ENCODE measurements at regions of chr5 and their contacts with region 1.

Region 1: GRCh38 chr5:36079200-36079761 is 12.6 kb upstream of the UGT3A2 start:
- DNase-seq: peak; percentile 61
- ATAC-seq: peak; percentile 99
- H3K4me3 ChIP-seq: no peak overlapping the region
- H3K27ac ChIP-seq: no peak overlapping the region
- H3K4me1 ChIP-seq: peaks cover 0 to 4% of the 10 kb centered on the region in 2 experiments; a peak in 1 of 4 replicates
- H3K27me3 ChIP-seq: no peaks in the 10 kb centered on the region
- CTCF ChIP-seq: peak; percentile 32 to 70 (median 69); a peak in 4 of 6 replicates
- POLR2A ChIP-seq: no peak
- RAD21 ChIP-seq: peak; percentile 64

Region 2: DNA sequence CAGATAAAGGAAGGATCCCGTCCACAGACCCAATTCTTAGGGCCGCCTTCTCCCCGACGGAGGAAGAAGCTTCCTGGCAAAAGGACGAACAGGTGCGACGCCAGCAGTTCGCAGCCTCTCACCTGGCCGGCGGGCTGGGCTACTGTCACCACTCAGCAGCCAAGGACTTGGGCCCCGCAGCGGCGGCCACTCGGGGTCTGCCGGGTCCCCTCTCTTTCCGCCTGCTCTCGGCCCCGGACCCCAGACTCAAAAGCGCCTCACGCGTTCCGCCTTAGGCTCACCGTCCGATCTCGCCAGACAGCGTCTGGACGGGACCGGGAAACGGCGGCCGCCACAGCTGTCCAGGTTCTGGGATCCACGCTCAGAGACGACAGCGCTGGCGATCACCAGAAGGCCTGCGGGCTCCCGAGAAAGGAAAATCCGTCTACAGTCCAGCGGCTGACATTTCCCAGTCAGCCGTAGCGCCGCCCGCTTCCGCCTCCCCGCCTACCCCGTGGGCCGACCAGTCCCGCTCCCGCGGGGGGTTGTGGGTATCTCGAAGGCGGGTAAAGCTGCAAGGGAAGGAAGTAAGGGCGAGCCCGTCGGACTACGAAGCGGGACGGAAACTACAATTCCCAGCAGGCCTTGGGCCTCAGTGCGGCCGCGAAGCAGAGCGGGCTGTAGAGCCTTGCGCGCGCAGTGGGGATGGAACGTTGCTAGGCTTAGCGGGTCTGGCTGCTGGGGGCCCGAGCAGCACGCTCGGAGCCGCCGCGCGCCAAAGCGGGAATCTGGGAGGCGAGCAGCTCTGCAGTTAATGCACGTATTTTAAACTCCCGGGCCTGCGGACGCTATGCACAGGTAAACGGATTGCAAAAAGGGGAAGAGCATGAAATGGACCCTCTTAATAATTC is 72.4 kb after region 1 on chr5 and contains the starts of genes LMBRD2 and SKP2:
- CTCF ChIA-PET with region 1: interaction called, 13 read pairs
- POLR2A ChIA-PET with region 1: interaction called, 4 read pairs
- RAD21 ChIA-PET with region 1: interaction called in 1 of 2 experiments, 4 read pairs
- intact Hi-C with region 1: no loop called
- DNase-seq: peak; percentile 92
- ATAC-seq: peak; percentile 98
- H3K4me3 ChIP-seq: peak within 1 kb of the TSS; percentile 73 to 81
- H3K27ac ChIP-seq: peak within 1 kb of the TSS; percentile 27
- H3K4me1 ChIP-seq: peaks cover 6 to 12% of the 10 kb centered on the region in 2 experiments; a peak in 3 of 4 replicates
- H3K27me3 ChIP-seq: no peaks in the 10 kb centered on the region
- CTCF ChIP-seq: no peak
- POLR2A ChIP-seq: peak; percentile 89
- RAD21 ChIP-seq: no peak
- total RNA-seq, gene LMBRD2: 1.1 TPM
- total RNA-seq, gene SKP2: 44.3 TPM

Region 3: GRCh38 chr5:36305571-36306326 is 226.5 kb after region 1 on chr5:
- CTCF ChIA-PET with region 1: interaction called, 12 read pairs
- POLR2A ChIA-PET with region 1: no interaction called
- RAD21 ChIA-PET with region 1: interaction called in 1 of 2 experiments, 4 read pairs
- intact Hi-C with region 1: loop called (anchors 2 kb)
- DNase-seq: peak; percentile 21
- ATAC-seq: peak; percentile 98
- H3K4me3 ChIP-seq: no peak overlapping the region
- H3K27ac ChIP-seq: no peak overlapping the region
- H3K4me1 ChIP-seq: no peaks in the 10 kb centered on the region
- H3K27me3 ChIP-seq: peaks cover 4% of the 10 kb centered on the region; the same call in 1 of the 2 replicates
- CTCF ChIP-seq: peak; percentile 61 to 80 (median 76)
- POLR2A ChIP-seq: no peak
- RAD21 ChIP-seq: peak; percentile 82

Region 4: DNA sequence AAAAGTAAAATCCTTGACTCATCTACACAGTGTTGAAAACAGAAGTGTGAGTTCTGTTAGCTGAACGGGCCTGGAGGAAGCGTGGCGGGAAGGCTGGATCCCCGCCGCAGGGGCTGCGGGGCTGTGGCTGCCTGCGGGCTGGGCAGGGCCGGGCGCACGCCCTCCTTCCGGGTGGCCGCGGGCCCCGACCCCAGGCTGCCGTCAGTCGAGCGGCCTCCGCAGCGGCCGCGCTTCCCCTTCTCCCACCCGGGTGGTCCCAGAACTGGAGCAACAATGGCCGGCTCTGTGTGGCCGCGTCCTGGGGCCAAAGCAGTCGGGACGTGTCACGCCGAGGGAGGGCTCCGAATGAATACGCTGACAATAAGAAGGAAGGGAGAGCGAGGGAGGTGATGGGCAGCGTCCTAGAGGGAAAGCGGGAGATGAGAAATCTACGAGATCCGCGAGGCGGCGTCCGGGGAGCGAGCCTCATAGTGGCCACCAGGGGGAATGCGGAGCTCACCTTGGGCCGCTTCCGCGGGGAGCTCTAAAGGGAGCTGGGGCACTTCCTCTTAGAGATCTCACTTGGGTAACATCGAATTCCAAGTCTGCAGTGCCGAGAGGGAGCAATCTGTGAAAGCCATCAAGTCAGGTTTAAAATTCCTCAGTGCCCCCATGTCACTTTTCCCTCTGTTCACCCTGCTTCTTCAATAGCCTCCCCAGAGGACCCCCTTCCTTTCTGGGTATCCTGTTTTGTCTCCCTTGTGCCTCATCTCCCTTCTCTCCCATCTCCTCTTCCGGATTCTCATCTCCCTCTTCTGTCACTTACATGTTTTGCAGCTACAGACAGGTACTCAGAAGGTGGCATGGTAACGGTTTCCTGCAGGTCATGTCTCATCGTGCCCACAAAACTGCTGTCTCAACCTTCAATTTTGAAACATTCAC is 611.0 kb after region 1 on chr5:
- CTCF ChIA-PET with region 1: interaction called, 16 read pairs
- POLR2A ChIA-PET with region 1: no interaction called
- RAD21 ChIA-PET with region 1: no interaction called
- intact Hi-C with region 1: loop called (anchors 5 kb)
- DNase-seq: peak; percentile 81
- ATAC-seq: peak; percentile 86
- H3K4me3 ChIP-seq: peak overlapping the region; percentile 39 to 52
- H3K27ac ChIP-seq: peak overlapping the region; percentile 29
- H3K4me1 ChIP-seq: peaks cover 8 to 19% of the 10 kb centered on the region in 2 experiments; a peak in 2 of 4 replicates
- H3K27me3 ChIP-seq: no peaks in the 10 kb centered on the region
- CTCF ChIP-seq: peak; percentile 60 to 91 (median 90)
- POLR2A ChIP-seq: no peak
- RAD21 ChIP-seq: peak; percentile 46

Measured in HCT116 (cell line).